Breast epithelium (tissue), 4 donors: ENCODE measurements at regions of chr10 and their contacts with region 1.

Region 1: DNA sequence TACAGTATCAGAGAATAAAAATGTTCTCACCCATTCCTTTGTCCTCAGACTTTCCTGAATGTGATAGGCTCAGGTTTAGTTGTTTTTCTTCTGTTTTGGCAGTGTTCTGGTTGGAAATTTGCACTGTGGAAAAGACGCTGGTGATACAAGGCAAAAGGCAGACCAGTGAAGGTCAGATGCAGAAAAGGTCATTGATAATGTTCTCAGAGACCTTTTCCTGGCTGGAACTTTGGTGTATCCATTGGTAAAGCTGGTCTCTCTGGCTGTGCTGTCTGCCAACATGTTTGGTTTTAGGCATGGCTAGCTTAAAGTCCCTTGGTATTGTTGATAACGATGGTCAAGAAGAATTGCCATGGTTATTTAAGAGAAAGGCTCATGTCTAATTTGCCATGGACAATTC is 11.5 kb downstream of the ARID5B start:
- DNase-seq: no peak
- H3K4me3 ChIP-seq: no peak overlapping the region
- H3K27ac ChIP-seq: no peak overlapping the region
- H3K4me1 ChIP-seq: no peaks in the 10 kb centered on the region
- H3K27me3 ChIP-seq: no peaks in the 10 kb centered on the region
- CTCF ChIP-seq: no peak
- POLR2A ChIP-seq: no peak

Region 2: DNA sequence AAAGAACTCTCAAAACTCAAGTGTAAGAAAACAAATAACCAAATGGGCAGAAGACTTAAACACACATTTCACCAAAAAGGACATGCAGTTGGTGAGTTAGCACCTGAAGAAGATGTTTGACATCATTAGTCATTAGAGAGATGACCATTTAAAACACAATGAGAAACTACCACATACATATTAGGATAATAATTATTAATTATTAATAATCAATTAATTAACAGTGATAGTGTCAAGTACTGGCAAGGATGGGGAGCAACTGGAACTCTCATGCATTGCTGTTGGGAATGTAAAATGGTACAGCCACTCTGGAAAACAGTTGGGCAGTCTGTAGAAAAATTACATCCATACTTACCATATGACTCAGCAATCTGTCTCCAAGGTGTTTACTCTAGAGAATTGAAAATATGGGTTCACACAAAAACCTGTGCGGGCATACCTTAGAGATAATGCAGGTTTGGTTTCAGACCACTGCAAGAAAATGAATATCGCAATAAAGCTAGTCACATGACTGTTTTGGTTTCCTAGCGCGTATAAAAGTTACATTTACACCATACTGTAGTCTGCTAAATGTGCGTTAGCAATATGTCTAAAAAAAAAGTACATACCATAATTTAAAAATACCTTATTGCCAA is 18.8 kb after region 1 on chr10:
- intact Hi-C with region 1: loop called (anchors 2 kb)
- DNase-seq: no peak
- H3K4me3 ChIP-seq: no peak overlapping the region
- H3K27ac ChIP-seq: no peak overlapping the region
- H3K4me1 ChIP-seq: no peaks in the 10 kb centered on the region
- H3K27me3 ChIP-seq: no peaks in the 10 kb centered on the region
- CTCF ChIP-seq: no peak
- POLR2A ChIP-seq: no peak